CD4-positive, alpha-beta T cell (primary cell): ENCODE measurements at regions of chr5 and their contacts with region 1.

Region 1: GRCh38 chr5:176447982-176448608 is at the start of gene FAF2:
- DNase-seq: peak; percentile 94 to 100 (median 98)
- ATAC-seq: peak; percentile 96
- H3K4me3 ChIP-seq: peak within 1 kb of the TSS; percentile 96
- H3K4me3 Mint-ChIP-seq: peak within 1 kb of the TSS; percentile 99
- H3K27ac ChIP-seq: peak within 1 kb of the TSS; percentile 81 to 96
- H3K27ac Mint-ChIP-seq: peak within 1 kb of the TSS; percentile 99
- H3K4me1 ChIP-seq: peaks cover 30% of the 10 kb centered on the region
- H3K4me1 Mint-ChIP-seq: peaks cover 49% of the 10 kb centered on the region
- H3K27me3 ChIP-seq: no peaks in the 10 kb centered on the region
- H3K27me3 Mint-ChIP-seq: no peaks in the 10 kb centered on the region
- CTCF ChIP-seq: peak; percentile 88
- total RNA-seq, gene FAF2: 27.5 to 30.1 TPM

Region 2: GRCh38 chr5:175045820-175046219 is 1402.3 kb before region 1 on chr5:
- CTCF ChIA-PET with region 1: no interaction called
- POLR2A ChIA-PET with region 1: no interaction called
- intact Hi-C with region 1: no loop called
- DNase-seq: no peak
- ATAC-seq: no peak
- H3K4me3 ChIP-seq: no peak overlapping the region
- H3K4me3 Mint-ChIP-seq: no peak overlapping the region
- H3K27ac ChIP-seq: no peak overlapping the region
- H3K27ac Mint-ChIP-seq: no peak overlapping the region
- H3K4me1 ChIP-seq: no peaks in the 10 kb centered on the region
- H3K4me1 Mint-ChIP-seq: no peaks in the 10 kb centered on the region
- H3K27me3 ChIP-seq: peaks cover 0 to 4% of the 10 kb centered on the region in 2 experiments
- H3K27me3 Mint-ChIP-seq: peaks cover 14% of the 10 kb centered on the region
- CTCF ChIP-seq: no peak

Region 3: GRCh38 chr5:176361437-176362232 is 86.5 kb before region 1 on chr5 and contains the start of gene KIAA1191:
- CTCF ChIA-PET with region 1: interaction called, 5 read pairs
- POLR2A ChIA-PET with region 1: interaction called, 20 read pairs
- intact Hi-C with region 1: loop called in 1 of 2 experiments (anchors 2 kb)
- DNase-seq: peak; percentile 89 to 98 (median 94)
- ATAC-seq: peak; percentile 92
- H3K4me3 ChIP-seq: peak within 1 kb of the TSS; percentile 98
- H3K4me3 Mint-ChIP-seq: peak within 1 kb of the TSS; percentile 96
- H3K27ac ChIP-seq: peak within 1 kb of the TSS; percentile 69 to 79
- H3K27ac Mint-ChIP-seq: peak within 1 kb of the TSS; percentile 87
- H3K4me1 ChIP-seq: peaks cover 41% of the 10 kb centered on the region
- H3K4me1 Mint-ChIP-seq: peaks cover 48% of the 10 kb centered on the region
- H3K27me3 ChIP-seq: no peaks in the 10 kb centered on the region
- H3K27me3 Mint-ChIP-seq: no peaks in the 10 kb centered on the region
- CTCF ChIP-seq: no peak
- total RNA-seq, gene KIAA1191: 64.8 TPM

Region 4: DNA sequence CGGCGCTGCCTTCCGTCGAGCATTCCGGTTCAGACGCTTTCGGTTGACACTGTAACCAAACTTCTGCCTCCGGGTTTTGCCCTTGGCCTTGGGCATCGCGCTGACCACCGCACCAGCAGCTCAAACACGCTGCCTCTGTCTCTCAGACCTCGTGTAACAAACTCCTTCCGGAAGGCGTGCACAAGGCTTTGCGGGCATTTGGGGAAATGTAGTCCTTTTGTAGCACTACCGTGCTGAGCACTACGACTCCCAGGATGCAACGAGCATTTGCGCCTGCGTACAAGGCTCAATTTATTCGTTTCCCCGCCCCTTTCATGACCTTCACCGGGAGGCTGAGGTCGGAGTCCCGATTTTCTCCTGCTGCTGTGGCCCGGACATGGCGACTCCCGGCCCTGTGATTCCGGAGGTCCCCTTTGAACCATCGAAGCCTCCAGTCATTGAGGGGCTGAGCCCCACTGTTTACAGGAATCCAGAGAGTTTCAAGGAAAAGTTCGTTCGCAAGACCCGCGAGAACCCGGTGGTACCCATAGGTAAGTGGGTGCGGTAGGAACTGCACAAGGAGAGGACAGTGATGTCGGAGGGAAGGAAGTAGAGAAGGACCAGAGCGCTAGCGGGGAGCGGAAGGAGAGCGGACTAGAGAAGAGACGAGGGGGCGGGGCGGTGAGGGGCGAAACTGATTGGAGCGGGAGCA is 59.5 kb before region 1 on chr5 and contains the starts of genes HIGD2A and NOP16:
- CTCF ChIA-PET with region 1: interaction called, 6 read pairs
- POLR2A ChIA-PET with region 1: interaction called, 15 read pairs
- intact Hi-C with region 1: loop called (anchors 2 kb)
- DNase-seq: peak; percentile 96 to 100 (median 99)
- ATAC-seq: peak; percentile 87
- H3K4me3 ChIP-seq: peak within 1 kb of the TSS; percentile 79
- H3K4me3 Mint-ChIP-seq: peak within 1 kb of the TSS; percentile 98
- H3K27ac ChIP-seq: peak within 1 kb of the TSS; percentile 87 to 95
- H3K27ac Mint-ChIP-seq: peak within 1 kb of the TSS; percentile 97
- H3K4me1 ChIP-seq: peaks cover 33% of the 10 kb centered on the region
- H3K4me1 Mint-ChIP-seq: peaks cover 38% of the 10 kb centered on the region
- H3K27me3 ChIP-seq: no peaks in the 10 kb centered on the region
- H3K27me3 Mint-ChIP-seq: no peaks in the 10 kb centered on the region
- CTCF ChIP-seq: no peak
- total RNA-seq, gene HIGD2A: 98.2 to 104 TPM
- total RNA-seq, gene NOP16: 12.0 to 14.5 TPM

Region 5: DNA sequence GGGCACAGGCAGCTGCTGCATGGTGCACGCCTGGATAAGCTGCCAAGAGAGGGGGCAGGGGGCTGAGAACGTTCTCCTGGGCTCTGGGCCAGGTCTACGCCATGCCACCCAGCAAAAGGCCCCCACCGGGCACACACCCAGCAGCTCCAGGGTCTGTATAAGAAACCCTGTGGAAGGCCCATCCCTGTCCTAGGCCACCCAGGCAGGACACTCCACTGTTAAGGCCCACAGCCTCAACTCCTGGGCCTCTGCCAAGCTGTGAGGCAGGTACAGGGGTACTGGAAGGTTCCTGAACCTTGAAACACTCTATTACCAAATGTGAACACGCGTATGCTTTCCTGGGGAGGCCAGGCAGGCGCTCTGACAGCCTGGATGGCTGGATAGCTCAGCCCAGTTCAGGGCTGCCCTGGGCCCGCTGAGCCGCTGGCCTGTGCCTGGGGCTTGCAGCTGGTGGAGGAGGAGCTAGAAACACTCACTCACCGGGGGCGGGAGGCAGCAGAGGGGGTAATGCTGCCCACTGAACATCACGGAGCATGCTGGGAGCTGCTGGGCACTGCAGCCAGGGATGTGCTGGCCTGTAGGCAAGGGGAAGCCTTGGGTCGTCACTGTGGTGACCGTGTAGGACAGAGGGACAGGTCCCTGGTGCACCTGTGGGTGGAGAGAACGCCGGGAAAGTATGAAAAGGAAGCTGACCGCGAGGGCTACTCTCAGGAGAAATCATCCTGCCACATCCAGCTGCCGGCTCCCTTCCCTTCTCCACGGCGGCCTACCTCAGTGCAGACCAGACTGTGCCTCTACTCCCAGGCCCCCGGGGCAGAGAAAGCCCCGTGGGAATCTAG is 83.1 kb after region 1 on chr5:
- CTCF ChIA-PET with region 1: interaction called, 42 read pairs
- POLR2A ChIA-PET with region 1: interaction called, 126 read pairs
- intact Hi-C with region 1: loop called in 1 of 2 experiments (anchors 2 kb)
- DNase-seq: peak in 1 of 14 experiments; percentile 31
- ATAC-seq: no peak
- H3K4me3 ChIP-seq: peak overlapping the region; percentile 49
- H3K4me3 Mint-ChIP-seq: peak overlapping the region; percentile 90
- H3K27ac ChIP-seq: peak overlapping the region; percentile 38 to 72
- H3K27ac Mint-ChIP-seq: peak overlapping the region; percentile 92
- H3K4me1 ChIP-seq: peaks cover 76% of the 10 kb centered on the region
- H3K4me1 Mint-ChIP-seq: peaks cover 55% of the 10 kb centered on the region
- H3K27me3 ChIP-seq: no peaks in the 10 kb centered on the region
- H3K27me3 Mint-ChIP-seq: no peaks in the 10 kb centered on the region
- CTCF ChIP-seq: no peak

Region 6: DNA sequence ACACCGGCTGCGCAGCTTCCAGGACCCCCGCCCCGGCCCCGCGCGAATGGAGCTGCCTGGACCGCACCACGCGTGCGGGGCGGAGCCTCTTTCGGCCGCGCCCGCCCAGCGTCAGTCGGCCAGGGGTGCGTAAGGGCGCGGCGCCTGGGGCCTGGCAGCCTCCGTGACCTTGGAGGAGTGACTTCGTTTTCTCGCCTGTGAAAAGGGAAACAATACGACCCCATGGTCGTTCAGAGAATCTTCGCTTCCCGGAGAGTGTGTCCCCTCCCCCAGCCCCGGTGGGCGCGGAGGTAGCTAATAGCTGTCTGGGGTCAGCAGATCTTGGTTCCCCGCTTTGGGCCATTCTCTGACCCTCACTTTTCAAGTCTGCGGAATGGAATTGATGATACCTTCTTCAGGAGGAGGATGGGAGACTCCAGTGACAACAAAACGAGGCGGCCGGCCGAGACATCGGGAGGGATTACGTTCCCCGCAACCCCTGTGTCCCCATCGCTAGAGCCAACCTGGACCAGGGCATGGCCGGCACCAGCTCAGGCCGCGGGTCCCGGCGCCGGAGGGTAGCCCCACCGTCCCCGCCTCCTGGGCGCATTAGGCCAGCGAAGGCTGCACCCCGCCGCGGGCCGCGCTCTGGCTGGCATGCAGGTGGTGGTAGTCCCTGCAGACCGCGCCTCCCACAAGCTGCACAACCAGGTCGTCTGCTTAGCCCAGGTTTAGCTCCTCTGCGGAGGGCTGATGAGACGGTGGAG is 95.5 kb after region 1 on chr5:
- CTCF ChIA-PET with region 1: interaction called, 42 read pairs
- POLR2A ChIA-PET with region 1: interaction called, 126 read pairs
- intact Hi-C with region 1: loop called in 1 of 2 experiments (anchors 1 kb)
- DNase-seq: peak; percentile 53 to 89 (median 70)
- ATAC-seq: peak; percentile 64
- H3K4me3 ChIP-seq: peak overlapping the region; percentile 76
- H3K4me3 Mint-ChIP-seq: peak overlapping the region; percentile 89
- H3K27ac ChIP-seq: peak overlapping the region; percentile 84 to 87
- H3K27ac Mint-ChIP-seq: peak overlapping the region; percentile 93
- H3K4me1 ChIP-seq: peaks cover 77% of the 10 kb centered on the region
- H3K4me1 Mint-ChIP-seq: peaks cover 80% of the 10 kb centered on the region
- H3K27me3 ChIP-seq: no peaks in the 10 kb centered on the region
- H3K27me3 Mint-ChIP-seq: no peaks in the 10 kb centered on the region
- CTCF ChIP-seq: no peak